GM12878 (cell line): ENCODE measurements at regions of chr12 and their contacts with region 1.

Region 1: DNA sequence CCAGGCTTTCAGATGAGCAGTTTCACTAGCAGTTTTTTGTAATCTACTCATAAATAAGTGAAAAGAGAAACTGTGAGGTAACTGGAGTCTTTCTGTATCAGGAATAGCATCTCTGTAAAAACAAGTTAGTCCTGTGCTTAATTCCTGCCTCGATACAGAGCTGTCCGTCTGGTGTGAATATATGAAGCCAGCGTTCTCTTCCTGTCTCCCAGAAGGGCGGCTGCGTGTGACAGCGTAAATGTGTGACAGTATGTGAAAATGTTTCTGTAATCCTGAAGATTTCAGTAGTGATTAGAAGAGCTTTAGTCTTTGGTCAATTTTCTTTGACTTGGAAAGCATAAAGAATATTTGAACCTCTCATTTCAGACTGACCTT is 150.3 kb downstream of the FBXL14 start:
- DNase-seq: no peak
- ATAC-seq: no peak
- H3K4me3 ChIP-seq: no peak overlapping the region
- H3K27ac ChIP-seq: no peak overlapping the region
- H3K4me1 ChIP-seq: peaks cover 3% of the 10 kb centered on the region
- H3K27me3 ChIP-seq: no peaks in the 10 kb centered on the region
- CTCF ChIP-seq: no peak
- EP300 ChIP-seq: no peak
- POLR2A ChIP-seq: no peak
- RAD21 ChIP-seq: no peak

Region 2: GRCh38 chr12:1050059-1050707 is 393.9 kb before region 1 on chr12:
- CTCF ChIA-PET with region 1: no interaction called
- POLR2A ChIA-PET with region 1: interaction called, 11 read pairs
- RAD21 ChIA-PET with region 1: no interaction called
- SMC1A ChIA-PET with region 1: no interaction called
- in situ Hi-C with region 1: no loop called
- intact Hi-C with region 1: no loop called
- DNase-seq: no peak
- ATAC-seq: no peak
- H3K4me3 ChIP-seq: no peak overlapping the region
- H3K27ac ChIP-seq: no peak overlapping the region
- H3K4me1 ChIP-seq: no peaks in the 10 kb centered on the region
- H3K27me3 ChIP-seq: peaks cover 0 to 2% of the 10 kb centered on the region in 2 experiments; a peak in 1 of 4 replicates
- CTCF ChIP-seq: no peak
- EP300 ChIP-seq: no peak
- POLR2A ChIP-seq: no peak
- RAD21 ChIP-seq: no peak

Region 3: GRCh38 chr12:1398673-1399072 is 45.5 kb before region 1 on chr12:
- CTCF ChIA-PET with region 1: no interaction called
- POLR2A ChIA-PET with region 1: no interaction called
- RAD21 ChIA-PET with region 1: no interaction called
- SMC1A ChIA-PET with region 1: no interaction called
- in situ Hi-C with region 1: no loop called
- intact Hi-C with region 1: no loop called
- DNase-seq: no peak
- ATAC-seq: no peak
- H3K4me3 ChIP-seq: no peak overlapping the region
- H3K27ac ChIP-seq: no peak overlapping the region
- H3K4me1 ChIP-seq: no peaks in the 10 kb centered on the region
- H3K27me3 ChIP-seq: no peaks in the 10 kb centered on the region
- CTCF ChIP-seq: no peak; a peak in 1 of 6 replicates
- EP300 ChIP-seq: no peak
- POLR2A ChIP-seq: no peak
- RAD21 ChIP-seq: peak; percentile 40

Region 4: DNA sequence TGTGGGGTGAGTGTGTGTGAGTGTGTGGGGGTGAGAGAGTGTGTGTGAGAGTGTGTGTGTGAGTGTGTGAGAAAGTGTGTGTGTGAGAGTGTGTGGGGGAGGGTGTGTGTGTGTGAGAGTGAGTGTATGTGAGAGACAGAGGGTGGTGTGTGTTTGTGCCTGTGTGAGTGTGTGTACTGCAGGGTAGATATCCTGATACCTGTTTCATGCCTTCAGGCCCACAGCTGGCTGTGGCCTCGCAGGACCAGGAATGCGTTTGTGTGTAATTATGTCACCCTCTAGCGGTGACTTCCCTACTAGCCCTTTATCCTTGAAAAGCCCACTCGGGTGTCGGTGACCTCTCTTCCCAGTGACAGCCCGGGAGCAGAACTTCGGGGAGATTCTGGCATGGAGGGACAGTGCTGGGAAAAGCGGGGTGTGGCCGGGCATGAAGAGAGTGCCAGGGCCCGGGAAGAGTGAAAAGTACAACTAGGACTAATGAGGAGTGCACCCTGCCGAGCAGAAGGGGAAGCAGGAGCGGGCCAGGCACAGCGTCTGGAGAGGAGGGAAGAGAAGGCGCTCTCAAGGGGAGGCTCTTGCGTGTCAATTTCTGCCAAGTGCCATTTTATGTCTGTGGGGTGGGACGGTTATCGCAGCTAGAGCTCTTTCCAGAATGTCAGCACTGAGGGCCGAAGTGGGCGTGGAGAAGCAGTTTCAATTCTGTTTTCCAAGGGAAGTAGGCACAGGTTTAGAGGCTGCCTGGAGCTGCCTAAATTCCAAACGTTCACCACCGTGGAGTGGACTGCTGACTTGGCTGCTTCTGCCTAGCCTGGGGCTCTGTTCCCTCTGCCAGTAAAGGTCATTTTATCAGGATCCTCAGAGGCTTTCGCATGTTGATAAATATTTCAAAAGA is 161.2 kb after region 1 on chr12:
- CTCF ChIA-PET with region 1: no interaction called
- POLR2A ChIA-PET with region 1: no interaction called
- RAD21 ChIA-PET with region 1: no interaction called
- SMC1A ChIA-PET with region 1: no interaction called
- in situ Hi-C with region 1: no loop called
- intact Hi-C with region 1: no loop called
- DNase-seq: no peak
- ATAC-seq: peak; percentile 73
- H3K4me3 ChIP-seq: peak overlapping the region; percentile 61; the same call in 1 of the 2 replicates
- H3K27ac ChIP-seq: peak overlapping the region; percentile 79
- H3K4me1 ChIP-seq: peaks cover 48% of the 10 kb centered on the region
- H3K27me3 ChIP-seq: no peaks in the 10 kb centered on the region
- CTCF ChIP-seq: peak; percentile 75 to 93 (median 79)
- EP300 ChIP-seq: no peak
- POLR2A ChIP-seq: no peak; the same call in 1 of the 2 replicates
- RAD21 ChIP-seq: peak; percentile 75